Activated CD4-positive, alpha-beta T cell treated with anti-CD3 and anti-CD28 coated beads for 36 hours (primary cell): ENCODE measurements at regions of chr22 and their contacts with region 1.

Region 1: GRCh38 chr22:23574371-23574811 is 5.7 kb downstream of the IGLL1 start:
- DNase-seq: no peak
- ATAC-seq: no peak
- H3K4me3 Mint-ChIP-seq: no peak overlapping the region
- H3K27ac Mint-ChIP-seq: no peak overlapping the region
- H3K4me1 Mint-ChIP-seq: peaks cover 2% of the 10 kb centered on the region
- H3K27me3 Mint-ChIP-seq: peaks cover 26% of the 10 kb centered on the region

Region 2: DNA sequence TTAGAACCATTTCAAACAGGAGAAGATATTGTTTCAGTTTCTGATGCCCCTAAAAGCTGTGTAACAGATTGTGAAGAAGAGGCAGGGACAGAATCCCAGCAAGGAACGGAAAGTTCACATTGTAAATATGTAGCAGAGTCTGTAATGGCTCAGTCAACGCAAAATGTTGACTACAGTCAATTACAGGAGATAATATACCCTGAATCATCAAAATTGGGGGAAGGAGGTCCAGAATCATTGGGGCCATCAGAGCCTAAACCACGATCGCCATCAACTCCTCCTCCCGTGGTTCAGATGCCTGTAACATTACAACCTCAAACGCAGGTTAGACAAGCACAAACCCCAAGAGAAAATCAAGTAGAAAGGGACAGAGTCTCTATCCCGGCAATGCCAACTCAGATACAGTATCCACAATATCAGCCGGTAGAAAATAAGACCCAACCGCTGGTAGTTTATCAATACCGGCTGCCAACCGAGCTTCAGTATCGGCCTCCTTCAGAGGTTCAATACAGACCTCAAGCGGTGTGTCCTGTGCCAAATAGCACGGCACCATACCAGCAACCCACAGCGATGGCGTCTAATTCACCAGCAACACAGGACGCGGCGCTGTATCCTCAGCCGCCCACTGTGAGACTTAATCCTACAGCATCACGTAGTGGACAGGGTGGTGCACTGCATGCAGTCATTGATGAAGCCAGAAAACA is 35.1 kb before region 1 on chr22:
- CTCF ChIA-PET with region 1: no interaction called
- POLR2A ChIA-PET with region 1: no interaction called
- intact Hi-C with region 1: no loop called
- DNase-seq: peak; percentile 87
- ATAC-seq: peak; percentile 100
- H3K4me3 Mint-ChIP-seq: no peak overlapping the region
- H3K27ac Mint-ChIP-seq: no peak overlapping the region
- H3K4me1 Mint-ChIP-seq: peaks cover 7% of the 10 kb centered on the region
- H3K27me3 Mint-ChIP-seq: no peaks in the 10 kb centered on the region

Region 3: GRCh38 chr22:23591201-23591791 is 16.9 kb after region 1 on chr22:
- CTCF ChIA-PET with region 1: interaction called, 12 read pairs
- POLR2A ChIA-PET with region 1: no interaction called
- intact Hi-C with region 1: no loop called
- DNase-seq: peak; percentile 77
- ATAC-seq: peak; percentile 79
- H3K4me3 Mint-ChIP-seq: no peak overlapping the region
- H3K27ac Mint-ChIP-seq: no peak overlapping the region
- H3K4me1 Mint-ChIP-seq: no peaks in the 10 kb centered on the region
- H3K27me3 Mint-ChIP-seq: no peaks in the 10 kb centered on the region

Region 4: GRCh38 chr22:23608583-23608982 is 34.2 kb after region 1 on chr22:
- CTCF ChIA-PET with region 1: no interaction called
- POLR2A ChIA-PET with region 1: no interaction called
- intact Hi-C with region 1: no loop called
- DNase-seq: peak; percentile 19
- ATAC-seq: no peak
- H3K4me3 Mint-ChIP-seq: no peak overlapping the region
- H3K27ac Mint-ChIP-seq: no peak overlapping the region
- H3K4me1 Mint-ChIP-seq: peaks cover 4% of the 10 kb centered on the region
- H3K27me3 Mint-ChIP-seq: no peaks in the 10 kb centered on the region

Region 5: GRCh38 chr22:23675492-23676415 is 101.4 kb after region 1 on chr22:
- CTCF ChIA-PET with region 1: no interaction called
- POLR2A ChIA-PET with region 1: no interaction called
- intact Hi-C with region 1: no loop called
- DNase-seq: no peak
- ATAC-seq: no peak
- H3K4me3 Mint-ChIP-seq: no peak overlapping the region
- H3K27ac Mint-ChIP-seq: no peak overlapping the region
- H3K4me1 Mint-ChIP-seq: no peaks in the 10 kb centered on the region
- H3K27me3 Mint-ChIP-seq: no peaks in the 10 kb centered on the region

Region 6: GRCh38 chr22:23767673-23768548 is 193.5 kb after region 1 on chr22 and contains the start of gene CHCHD10:
- CTCF ChIA-PET with region 1: no interaction called
- POLR2A ChIA-PET with region 1: no interaction called
- intact Hi-C with region 1: no loop called
- DNase-seq: peak; percentile 87
- ATAC-seq: peak; percentile 66
- H3K4me3 Mint-ChIP-seq: peak within 1 kb of the TSS; percentile 75
- H3K27ac Mint-ChIP-seq: peak within 1 kb of the TSS; percentile 72
- H3K4me1 Mint-ChIP-seq: peaks cover 36% of the 10 kb centered on the region
- H3K27me3 Mint-ChIP-seq: no peaks in the 10 kb centered on the region
- total RNA-seq, gene CHCHD10: 131 to 134 TPM

Region 7: DNA sequence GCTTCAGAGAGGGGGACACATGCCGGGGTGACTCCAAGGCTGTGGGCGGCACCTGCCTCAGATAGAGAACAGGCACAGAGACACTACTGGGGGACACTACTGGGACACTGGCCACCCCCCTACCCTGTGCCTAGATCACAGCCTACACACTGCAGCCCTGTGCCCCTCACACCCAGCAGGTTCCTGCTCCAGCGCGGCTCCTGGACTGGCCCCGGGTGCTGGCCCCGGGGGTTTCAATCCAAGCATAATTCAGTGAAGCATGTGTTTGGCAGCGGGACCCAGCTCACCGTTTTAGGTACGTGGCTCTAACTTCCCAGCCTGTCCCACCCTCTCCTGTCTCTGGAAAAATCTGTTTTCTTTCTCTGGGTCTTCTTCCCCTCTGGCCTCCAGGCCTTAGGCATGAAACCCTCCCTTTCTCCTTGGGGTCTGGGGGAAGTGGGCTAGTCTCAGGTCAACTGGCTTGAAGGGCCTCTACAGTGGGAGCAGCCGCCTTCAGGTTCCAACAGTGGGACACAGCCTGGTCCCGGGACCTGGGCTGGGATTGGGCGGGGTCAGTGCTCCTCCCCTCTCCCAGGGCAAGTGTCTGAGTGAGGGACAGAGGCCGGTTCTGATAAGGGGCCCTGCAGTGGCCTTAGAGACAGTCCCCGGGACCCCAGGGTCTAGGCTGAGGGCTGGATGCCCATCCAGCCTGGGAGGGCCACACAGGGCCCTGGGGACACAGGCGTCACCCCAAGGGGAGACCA is 1743.9 kb after region 1 on chr22:
- CTCF ChIA-PET with region 1: no interaction called
- POLR2A ChIA-PET with region 1: no interaction called
- intact Hi-C with region 1: loop called in 1 of 2 experiments (anchors 10 kb)
- DNase-seq: no peak
- ATAC-seq: no peak
- H3K4me3 Mint-ChIP-seq: no peak overlapping the region
- H3K27ac Mint-ChIP-seq: no peak overlapping the region
- H3K4me1 Mint-ChIP-seq: no peaks in the 10 kb centered on the region
- H3K27me3 Mint-ChIP-seq: peaks cover 4% of the 10 kb centered on the region